HEK293 (cell line): ENCODE measurements at regions of chr15 and their contacts with region 1.

Region 1: DNA sequence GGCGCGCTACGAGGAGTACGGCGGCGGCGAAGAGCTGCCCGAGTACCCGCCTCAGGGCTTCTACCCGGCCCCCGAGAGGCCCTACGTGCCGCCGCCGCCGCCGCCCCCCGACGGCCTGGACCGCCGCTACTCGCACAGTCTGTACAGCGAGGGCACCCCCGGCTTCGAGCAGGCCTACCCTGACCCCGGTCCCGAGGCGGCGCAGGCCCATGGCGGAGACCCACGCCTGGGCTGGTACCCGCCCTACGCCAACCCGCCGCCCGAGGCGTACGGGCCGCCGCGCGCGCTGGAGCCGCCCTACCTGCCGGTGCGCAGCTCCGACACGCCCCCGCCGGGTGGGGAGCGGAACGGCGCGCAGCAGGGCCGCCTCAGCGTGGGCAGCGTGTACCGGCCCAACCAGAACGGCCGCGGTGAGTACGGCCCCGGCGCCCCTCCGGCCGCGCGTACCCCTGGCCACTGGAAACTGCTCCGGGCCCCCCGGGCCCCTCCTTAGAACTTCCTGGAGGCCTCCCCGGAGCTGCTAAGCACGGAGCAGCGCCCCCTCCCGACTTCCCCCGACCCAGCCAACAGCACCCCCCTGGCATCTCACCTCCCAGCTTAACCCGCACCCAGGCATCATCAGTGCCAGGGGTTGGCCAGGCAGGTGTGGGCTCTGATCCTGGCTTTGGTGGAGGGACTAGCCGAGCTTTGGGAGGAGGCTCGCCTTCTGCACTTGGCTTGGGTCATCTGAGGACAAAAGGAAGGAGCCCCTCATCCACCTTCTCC is 1.4 kb downstream of the LOXL1 start:
- H3K4me3 ChIP-seq: peak overlapping the region; percentile 49
- H3K27ac ChIP-seq: peak overlapping the region; percentile 75; the same call in 1 of the 2 replicates
- H3K4me1 ChIP-seq: peaks cover 20% of the 10 kb centered on the region
- CTCF ChIP-seq: peak; percentile 95

Region 2: DNA sequence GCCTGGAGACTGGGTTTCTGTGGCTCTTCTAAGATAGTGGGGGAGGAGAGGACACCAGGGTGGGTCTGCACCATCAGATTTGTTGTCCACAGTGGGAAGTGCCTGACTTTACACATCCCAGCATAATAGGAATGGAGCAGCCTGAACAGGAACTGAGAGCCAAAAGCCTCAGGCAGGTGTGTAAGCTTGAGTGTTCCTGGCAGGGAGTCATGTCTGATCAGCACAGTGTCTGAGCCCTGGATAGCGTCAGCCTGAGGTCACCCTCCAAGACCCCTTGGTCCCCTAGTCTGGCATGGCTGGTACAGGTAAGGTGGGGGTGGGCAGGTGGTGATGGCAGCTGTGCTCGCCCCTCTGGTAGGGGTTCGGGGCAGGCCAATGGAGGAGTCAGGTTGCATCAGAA is 194.7 kb before region 1 on chr15:
- CTCF ChIA-PET with region 1: no interaction called
- POLR2A ChIA-PET with region 1: no interaction called
- H3K4me3 ChIP-seq: no peak overlapping the region
- H3K27ac ChIP-seq: no peak overlapping the region
- H3K4me1 ChIP-seq: no peaks in the 10 kb centered on the region
- CTCF ChIP-seq: no peak

Region 3: DNA sequence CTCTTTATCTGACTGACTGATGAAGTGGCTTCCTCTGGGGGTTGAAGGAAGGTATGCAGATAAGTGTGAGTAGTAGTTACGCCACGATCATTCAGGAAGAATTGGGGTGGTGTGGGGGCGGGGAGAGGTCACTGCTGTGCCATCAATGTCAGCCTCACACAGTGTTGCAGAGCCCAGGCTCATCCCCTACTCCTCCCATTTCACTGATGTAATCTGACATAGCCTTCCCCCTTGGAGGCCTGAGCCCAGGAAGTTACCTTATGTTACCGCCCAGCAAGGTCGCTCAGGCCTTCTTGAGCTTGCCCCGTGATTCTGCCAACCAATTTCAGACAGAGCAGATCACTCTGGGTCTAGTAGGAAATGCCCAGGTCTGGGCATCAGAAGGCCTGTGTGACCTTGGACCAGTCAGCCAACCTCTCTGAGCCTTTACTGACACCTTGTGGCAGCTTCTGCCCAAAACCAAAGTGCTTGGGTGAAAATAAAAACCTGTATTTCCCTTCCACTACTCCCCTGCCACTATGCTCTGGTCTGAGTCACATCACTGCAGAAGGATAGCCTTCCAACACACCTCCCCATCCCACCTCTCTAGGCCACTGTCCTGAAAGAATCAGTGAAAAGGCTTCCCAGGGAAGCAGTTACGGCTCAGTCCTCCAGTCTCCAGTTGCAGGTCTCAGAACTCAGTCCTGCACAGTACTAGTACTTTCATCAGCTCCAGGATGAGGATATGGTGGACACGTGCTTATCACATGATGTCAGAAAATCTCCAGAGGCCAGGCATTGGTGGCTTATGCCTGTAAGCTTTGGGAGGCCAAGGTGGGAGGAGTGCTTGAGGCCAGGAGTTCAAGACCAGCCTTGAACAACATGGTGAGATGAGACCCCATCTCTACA is 146.4 kb before region 1 on chr15:
- CTCF ChIA-PET with region 1: no interaction called
- POLR2A ChIA-PET with region 1: no interaction called
- H3K4me3 ChIP-seq: no peak overlapping the region
- H3K27ac ChIP-seq: no peak overlapping the region
- H3K4me1 ChIP-seq: no peaks in the 10 kb centered on the region
- CTCF ChIP-seq: peak; percentile 70; the same call in 1 of the 2 replicates

Region 4: GRCh38 chr15:73897441-73898261 is 30.0 kb before region 1 on chr15:
- CTCF ChIA-PET with region 1: interaction called, 16 read pairs
- POLR2A ChIA-PET with region 1: no interaction called
- H3K4me3 ChIP-seq: no peak overlapping the region
- H3K27ac ChIP-seq: no peak overlapping the region
- H3K4me1 ChIP-seq: no peaks in the 10 kb centered on the region
- CTCF ChIP-seq: peak; percentile 96

Region 5: DNA sequence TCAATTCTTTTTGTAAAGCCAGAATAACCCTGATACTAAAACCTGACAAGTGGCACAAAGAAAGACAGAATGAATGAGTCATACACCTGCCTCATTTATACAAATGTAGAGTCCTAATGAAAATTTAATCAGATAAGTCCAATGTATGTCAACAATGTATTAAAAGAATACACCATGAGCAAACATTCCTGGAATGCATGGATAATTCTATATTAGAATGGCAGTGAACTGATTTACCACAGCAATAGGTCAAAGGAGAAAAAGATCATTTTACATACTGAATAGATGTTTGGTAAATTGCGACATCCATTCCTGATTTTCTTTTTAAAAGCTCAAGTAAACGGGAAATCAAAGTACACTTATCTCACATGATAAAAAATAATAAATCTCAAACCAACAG is 12.6 kb before region 1 on chr15:
- CTCF ChIA-PET with region 1: interaction called, 12 read pairs
- POLR2A ChIA-PET with region 1: interaction called, 4 read pairs
- H3K4me3 ChIP-seq: no peak overlapping the region
- H3K27ac ChIP-seq: no peak overlapping the region
- H3K4me1 ChIP-seq: no peaks in the 10 kb centered on the region
- CTCF ChIP-seq: no peak

Region 6: DNA sequence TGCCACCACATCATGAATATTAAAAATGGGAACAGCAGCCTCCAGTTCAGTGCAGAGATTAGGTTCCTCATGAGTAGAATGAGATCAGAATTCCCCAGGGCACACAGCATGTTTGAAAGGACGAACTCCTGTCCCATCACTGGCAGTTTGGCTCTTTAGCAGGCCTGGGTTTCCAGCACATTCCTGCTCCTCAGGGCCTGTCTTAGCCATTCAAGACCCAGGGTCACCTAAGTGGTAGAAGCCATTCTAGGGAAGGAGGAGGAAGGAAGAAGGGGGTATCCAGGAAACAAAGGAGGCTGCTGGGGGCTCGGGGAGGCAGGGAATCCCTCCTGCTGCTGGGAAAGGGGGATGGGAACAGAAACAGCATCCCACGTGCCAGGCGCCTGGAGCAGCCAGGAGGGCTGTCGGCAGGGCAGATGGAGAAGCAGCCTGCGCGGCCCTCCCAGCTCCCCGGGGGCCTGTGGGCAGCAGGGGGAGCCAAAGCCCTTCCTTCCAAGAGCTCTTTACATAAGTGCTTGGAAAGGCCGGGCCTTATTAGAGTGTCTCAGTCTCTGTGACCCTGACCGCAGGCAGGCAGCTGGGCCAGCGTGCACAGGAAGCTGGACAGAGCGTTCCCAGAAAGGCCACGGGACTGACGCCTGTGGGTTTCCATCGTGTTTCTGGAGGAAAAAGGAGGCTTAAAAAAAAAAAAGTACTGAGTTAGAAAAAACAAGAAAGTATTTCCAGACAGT is 23.3 kb after region 1 on chr15:
- CTCF ChIA-PET with region 1: interaction called, 19 read pairs
- POLR2A ChIA-PET with region 1: interaction called, 3 read pairs
- H3K4me3 ChIP-seq: no peak overlapping the region
- H3K27ac ChIP-seq: no peak overlapping the region; the same call in 1 of the 2 replicates
- H3K4me1 ChIP-seq: peaks cover 6% of the 10 kb centered on the region; the same call in 1 of the 2 replicates
- CTCF ChIP-seq: peak; percentile 93

Region 7: GRCh38 chr15:73972984-73973682 is 45.5 kb after region 1 on chr15:
- CTCF ChIA-PET with region 1: interaction called, 11 read pairs
- POLR2A ChIA-PET with region 1: no interaction called
- H3K4me3 ChIP-seq: no peak overlapping the region
- H3K27ac ChIP-seq: no peak overlapping the region
- H3K4me1 ChIP-seq: no peaks in the 10 kb centered on the region; the same call in 1 of the 2 replicates
- CTCF ChIP-seq: peak; percentile 95

Region 8: GRCh38 chr15:74222240-74223119 is 294.8 kb after region 1 on chr15:
- CTCF ChIA-PET with region 1: no interaction called
- POLR2A ChIA-PET with region 1: no interaction called
- H3K4me3 ChIP-seq: no peak overlapping the region
- H3K27ac ChIP-seq: peak overlapping the region; percentile 66; the same call in 1 of the 2 replicates
- H3K4me1 ChIP-seq: peaks cover 28% of the 10 kb centered on the region
- CTCF ChIP-seq: no peak